ENCODE measurements at regions of chr2 and their contacts with region 1.

Region 1: GRCh38 chr2:168455648-168456520 is at the start of gene CERS6:
- DNase-seq: peak; percentile 96 to 97
- ATAC-seq: peak; percentile 96 to 99 (median 98)
- H3K4me3 ChIP-seq: peak within 1 kb of the TSS; percentile 71 to 97 (median 84)
- H3K27ac ChIP-seq: peak within 1 kb of the TSS; percentile 66 to 93 (median 84)
- H3K4me1 ChIP-seq: peaks cover 0 to 36% (median 7%) of the 10 kb centered on the region in 9 donors
- H3K27me3 ChIP-seq: no peaks in the 10 kb centered on the region
- CTCF ChIP-seq: no peak
- total RNA-seq, gene CERS6: 47.4 to 76.3 (median 58.2) TPM

Region 2: GRCh38 chr2:168097431-168097830 is 358.5 kb before region 1 on chr2:
- intact Hi-C with region 1: no loop called
- DNase-seq: no peak
- ATAC-seq: no peak
- H3K4me3 ChIP-seq: no peak overlapping the region
- H3K27ac ChIP-seq: no peak overlapping the region
- H3K4me1 ChIP-seq: no peaks in the 10 kb centered on the region
- H3K27me3 ChIP-seq: no peaks in the 10 kb centered on the region
- CTCF ChIP-seq: no peak

Region 3: DNA sequence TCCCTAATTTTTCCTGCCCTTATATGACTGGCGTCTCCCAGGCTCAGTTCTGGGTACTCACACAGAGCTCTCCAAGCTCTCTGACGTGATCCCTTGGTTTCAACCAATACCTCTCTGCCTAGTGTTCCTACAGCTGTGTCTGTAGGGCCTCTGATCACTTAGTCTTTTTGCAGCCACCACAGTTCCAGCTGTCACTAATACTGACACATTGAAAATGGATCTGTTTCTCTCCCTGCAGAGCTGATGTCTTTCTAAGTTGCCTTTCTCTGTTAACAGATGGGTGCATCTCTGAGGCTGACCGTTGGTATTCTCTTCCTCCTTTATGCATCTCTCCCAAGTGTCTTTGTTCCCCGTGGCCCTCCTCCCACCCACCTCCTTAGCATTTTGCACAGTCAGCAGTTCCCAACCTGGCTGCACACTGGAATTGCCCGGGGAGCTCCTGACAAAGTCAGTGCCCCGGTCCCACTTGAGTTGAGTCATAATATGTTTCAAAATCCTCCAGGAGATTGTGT is 62.7 kb after region 1 on chr2:
- intact Hi-C with region 1: loop called in 1 of 10 experiments (anchors 5 kb)
- DNase-seq: peak in 1 of 2 donors; percentile 17
- ATAC-seq: peak in 7 of 8 donors; percentile 38 to 90 (median 84)
- H3K4me3 ChIP-seq: no peak overlapping the region
- H3K27ac ChIP-seq: peak overlapping the region in 8 of 10 donors; percentile 5 to 65 (median 58)
- H3K4me1 ChIP-seq: peaks cover 0 to 77% (median 45%) of the 10 kb centered on the region in 9 donors
- H3K27me3 ChIP-seq: no peaks in the 10 kb centered on the region
- CTCF ChIP-seq: no peak

Region 4: GRCh38 chr2:168635065-168635577 is 179.2 kb after region 1 on chr2:
- intact Hi-C with region 1: loop called in 2 of 10 experiments (anchors 5 kb)
- DNase-seq: peak; percentile 31 to 76
- ATAC-seq: peak; percentile 32 to 72 (median 54)
- H3K4me3 ChIP-seq: peak overlapping the region in 1 of 10 donors; percentile 7
- H3K27ac ChIP-seq: peak overlapping the region in 8 of 10 donors; percentile 11 to 87 (median 77)
- H3K4me1 ChIP-seq: peaks cover 9 to 76% (median 59%) of the 10 kb centered on the region in 9 donors
- H3K27me3 ChIP-seq: no peaks in the 10 kb centered on the region
- CTCF ChIP-seq: no peak

Region 5: DNA sequence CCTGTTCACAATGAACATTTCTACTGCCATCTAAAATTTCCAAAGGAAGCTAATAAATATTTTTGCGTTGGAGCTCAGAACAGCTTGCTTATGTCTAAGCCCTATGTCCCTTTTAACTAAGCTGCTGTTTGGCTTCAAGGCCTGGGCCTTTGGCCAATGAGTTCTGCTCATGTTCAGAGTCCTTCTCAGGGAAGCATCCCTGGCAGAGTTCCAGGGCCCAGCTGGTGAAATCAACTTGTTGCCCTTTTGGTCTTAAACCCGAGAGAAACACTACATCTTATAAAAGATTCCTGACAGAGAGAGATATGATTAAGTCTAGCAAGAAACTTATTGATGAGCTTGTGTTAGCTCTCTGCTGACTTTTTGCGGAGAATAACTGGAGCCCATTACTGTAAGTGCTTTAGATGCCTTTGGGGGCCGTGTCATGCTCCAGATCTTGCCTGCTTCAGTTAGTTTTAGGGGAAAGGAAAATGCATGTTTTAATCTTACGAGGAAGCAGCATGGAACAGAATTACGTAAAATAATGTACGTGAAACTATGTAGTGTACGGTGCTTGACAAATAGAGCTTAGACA is 244.0 kb after region 1 on chr2:
- intact Hi-C with region 1: loop called in 1 of 10 experiments (anchors 10 kb)
- DNase-seq: peak; percentile 79 to 85
- ATAC-seq: peak in 7 of 8 donors; percentile 62 to 80 (median 77)
- H3K4me3 ChIP-seq: no peak overlapping the region
- H3K27ac ChIP-seq: peak overlapping the region in 2 of 10 donors; percentile 3
- H3K4me1 ChIP-seq: peaks cover 6 to 33% (median 13%) of the 10 kb centered on the region in 9 donors
- H3K27me3 ChIP-seq: no peaks in the 10 kb centered on the region
- CTCF ChIP-seq: no peak

Measured in heart right ventricle (tissue), 16 donors.